Calu3 (cell line): ENCODE measurements at regions of chr3 and their contacts with region 1.

Region 1: DNA sequence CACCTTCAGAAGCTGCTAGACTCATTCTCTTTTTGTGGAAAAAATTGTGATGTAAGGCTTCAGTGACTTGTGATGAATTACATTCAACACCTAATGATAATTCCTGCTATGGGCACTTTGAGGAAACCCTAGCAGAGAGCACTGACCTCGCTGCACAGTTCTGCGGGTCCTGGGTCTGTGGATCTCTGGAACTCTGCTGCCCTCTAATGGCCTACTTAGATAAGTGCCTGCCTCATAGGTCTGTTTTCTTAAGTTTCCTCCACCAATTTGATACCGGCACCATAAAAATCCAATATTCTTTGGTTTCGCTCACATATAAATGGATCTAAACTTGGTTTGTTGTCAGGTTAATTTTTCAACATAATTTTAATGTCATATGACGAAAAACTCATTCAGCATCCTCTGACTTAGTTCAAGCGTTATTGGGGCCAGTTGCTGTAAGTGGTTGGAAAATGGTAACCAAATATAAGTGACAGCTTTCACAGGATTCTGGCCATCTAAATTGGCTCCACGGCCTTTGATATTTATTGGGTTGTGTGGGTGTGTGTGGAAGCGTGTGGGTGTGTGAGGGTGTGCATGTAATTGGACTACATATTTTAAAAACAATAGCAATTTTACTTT is 10.4 kb downstream of the SLITRK3 start:
- DNase-seq: peak; percentile 81
- H3K4me3 Mint-ChIP-seq: no peak overlapping the region
- H3K27ac Mint-ChIP-seq: no peak overlapping the region
- H3K4me1 Mint-ChIP-seq: peaks cover 8% of the 10 kb centered on the region
- H3K27me3 Mint-ChIP-seq: no peaks in the 10 kb centered on the region
- CTCF ChIP-seq: peak; percentile 91

Region 2: GRCh38 chr3:163916596-163917554 is 1268.9 kb before region 1 on chr3:
- CTCF ChIA-PET with region 1: no interaction called
- intact Hi-C with region 1: loop called (anchors 1 kb)
- DNase-seq: peak; percentile 57
- H3K4me3 Mint-ChIP-seq: no peak overlapping the region
- H3K27ac Mint-ChIP-seq: no peak overlapping the region
- H3K4me1 Mint-ChIP-seq: no peaks in the 10 kb centered on the region
- H3K27me3 Mint-ChIP-seq: no peaks in the 10 kb centered on the region
- CTCF ChIP-seq: peak; percentile 37

Region 3: DNA sequence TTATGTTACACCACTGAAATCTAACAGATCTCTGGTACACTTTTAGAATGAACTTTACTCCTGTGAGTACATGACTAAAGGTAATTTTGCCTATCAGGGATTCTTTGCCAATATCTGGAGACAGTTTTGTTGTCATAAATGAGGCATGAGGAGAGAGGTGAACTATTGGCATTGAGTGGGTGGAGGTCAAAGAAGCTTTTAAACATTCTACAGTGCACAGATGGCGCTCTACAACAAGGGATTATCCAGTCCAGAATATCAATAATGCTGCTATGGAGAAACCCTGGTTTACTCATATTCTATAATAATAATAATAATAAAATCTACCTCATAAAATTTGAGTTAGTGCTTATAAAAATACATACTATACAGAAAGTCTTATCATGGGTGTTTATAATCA is 809.8 kb before region 1 on chr3:
- CTCF ChIA-PET with region 1: no interaction called
- intact Hi-C with region 1: loop called (anchors 1 kb)
- DNase-seq: peak; percentile 11
- H3K4me3 Mint-ChIP-seq: no peak overlapping the region
- H3K27ac Mint-ChIP-seq: no peak overlapping the region
- H3K4me1 Mint-ChIP-seq: no peaks in the 10 kb centered on the region
- H3K27me3 Mint-ChIP-seq: no peaks in the 10 kb centered on the region
- CTCF ChIP-seq: no peak

Region 4: DNA sequence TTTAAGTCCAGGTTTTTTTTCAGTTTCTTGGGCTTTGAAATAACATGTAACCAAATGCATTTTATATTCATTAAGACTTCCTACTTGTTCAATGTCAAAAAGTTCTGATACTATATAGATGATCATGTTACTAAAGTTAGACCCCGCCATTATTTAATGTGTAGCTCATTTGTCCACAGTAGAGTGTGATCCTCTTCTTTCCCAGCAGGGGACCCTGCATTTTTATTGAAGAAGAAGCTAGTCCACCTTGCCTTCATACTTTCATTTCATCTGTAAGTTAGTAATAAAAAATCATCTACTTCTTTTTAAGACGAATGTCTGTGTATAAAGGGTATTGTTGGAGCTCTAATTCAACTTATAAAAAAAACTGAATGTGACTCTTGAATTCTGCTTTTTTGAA is 512.1 kb before region 1 on chr3:
- CTCF ChIA-PET with region 1: no interaction called
- intact Hi-C with region 1: loop called (anchors 5 kb)
- DNase-seq: peak; percentile 15
- H3K4me3 Mint-ChIP-seq: no peak overlapping the region
- H3K27ac Mint-ChIP-seq: no peak overlapping the region
- H3K4me1 Mint-ChIP-seq: no peaks in the 10 kb centered on the region
- H3K27me3 Mint-ChIP-seq: no peaks in the 10 kb centered on the region
- CTCF ChIP-seq: peak; percentile 34

Region 5: DNA sequence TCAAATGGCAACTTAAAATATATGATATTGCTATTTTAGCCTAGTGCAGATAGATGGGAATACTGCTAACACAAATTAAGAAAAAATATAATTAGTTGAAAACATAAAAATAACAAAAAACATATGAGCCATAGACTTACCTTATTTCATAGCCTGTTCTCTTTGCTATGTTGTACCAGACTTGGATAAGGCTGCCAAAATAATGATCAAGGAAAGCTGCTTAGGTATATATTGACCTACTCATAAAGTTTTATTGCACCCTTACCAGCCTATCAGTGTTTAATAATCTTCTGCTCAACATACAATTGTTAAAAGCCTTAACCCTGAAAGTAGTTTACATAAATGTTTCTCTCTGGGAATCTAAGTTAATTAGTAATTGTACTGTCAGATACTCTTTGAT is 107.5 kb before region 1 on chr3 and contains the start of gene SI:
- CTCF ChIA-PET with region 1: interaction called, 3 read pairs
- intact Hi-C with region 1: loop called (anchors 1 kb)
- DNase-seq: no peak
- H3K4me3 Mint-ChIP-seq: no peak within 1 kb of the TSS
- H3K27ac Mint-ChIP-seq: no peak within 1 kb of the TSS
- H3K4me1 Mint-ChIP-seq: no peaks in the 10 kb centered on the region
- H3K27me3 Mint-ChIP-seq: no peaks in the 10 kb centered on the region
- CTCF ChIP-seq: no peak
- total RNA-seq, gene SI: not detected in 2 replicates